A673 (cell line): ENCODE measurements at regions of chr13 and their contacts with region 1.

Region 1: DNA sequence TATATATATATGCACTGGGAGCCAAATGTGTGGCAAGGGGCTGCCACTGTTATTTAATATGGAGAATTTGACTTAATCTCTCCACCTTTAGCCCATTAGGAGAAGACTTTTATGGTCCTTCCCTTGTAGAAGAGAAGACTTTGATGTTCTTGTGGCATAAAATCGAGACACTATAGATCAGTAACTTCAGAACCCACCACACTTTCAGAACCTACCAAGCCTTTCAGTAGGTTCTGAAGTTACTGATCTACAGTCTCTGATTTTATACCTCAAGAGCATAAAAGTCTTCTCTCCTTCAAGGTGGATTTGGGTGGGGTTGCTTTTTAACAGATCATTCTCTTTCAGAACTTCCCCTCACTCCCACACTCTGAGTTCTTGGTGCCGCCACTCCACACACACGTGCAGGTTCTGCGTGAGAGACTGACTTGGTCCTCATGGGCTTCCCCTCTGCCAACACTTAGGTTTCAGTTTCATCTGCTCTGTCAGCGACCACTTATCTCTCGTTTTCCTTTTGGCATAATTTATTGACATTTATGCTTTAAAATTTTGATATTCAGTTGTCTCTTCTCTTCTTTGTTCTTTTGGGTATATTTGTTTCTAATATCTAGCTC is 213.4 kb upstream of the PCDH17 start:
- DNase-seq: no peak
- H3K4me3 ChIP-seq: no peak overlapping the region
- H3K27ac ChIP-seq: no peak overlapping the region
- H3K4me1 ChIP-seq: no peaks in the 10 kb centered on the region
- H3K27me3 ChIP-seq: no peaks in the 10 kb centered on the region
- CTCF ChIP-seq: no peak

Region 2: DNA sequence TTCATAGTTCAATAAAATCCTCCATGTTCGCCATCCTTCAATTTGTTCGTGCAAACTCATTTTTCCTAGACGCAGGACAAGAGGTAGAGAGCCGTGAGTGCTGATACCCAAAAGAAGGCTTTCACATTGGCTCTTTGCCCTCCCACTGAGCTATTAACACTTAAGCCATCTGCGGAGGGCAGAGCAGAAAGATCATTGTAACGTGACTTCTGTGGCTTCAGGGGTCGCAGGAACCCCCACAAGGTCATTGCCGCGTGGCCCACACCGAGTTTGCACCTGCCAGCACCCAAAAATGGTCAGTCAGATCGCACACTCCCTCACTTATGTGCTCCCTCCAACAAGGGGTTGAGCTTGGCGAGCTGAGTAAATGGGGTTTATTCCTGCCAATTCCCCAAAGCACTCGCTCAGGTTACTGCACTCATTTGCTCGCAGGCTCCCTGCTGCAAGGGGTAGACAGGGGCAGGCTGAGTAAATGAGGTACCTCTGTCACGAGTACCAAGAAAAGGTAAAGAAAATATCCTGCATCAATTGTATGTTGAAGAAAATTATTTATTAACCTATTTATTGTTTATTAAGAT is 107.1 kb before region 1 on chr13:
- CTCF ChIA-PET with region 1: no interaction called
- POLR2A ChIA-PET with region 1: interaction called, 14 read pairs
- intact Hi-C with region 1: no loop called
- DNase-seq: no peak
- H3K4me3 ChIP-seq: no peak overlapping the region
- H3K27ac ChIP-seq: no peak overlapping the region
- H3K4me1 ChIP-seq: no peaks in the 10 kb centered on the region
- H3K27me3 ChIP-seq: no peaks in the 10 kb centered on the region
- CTCF ChIP-seq: no peak

Region 3: DNA sequence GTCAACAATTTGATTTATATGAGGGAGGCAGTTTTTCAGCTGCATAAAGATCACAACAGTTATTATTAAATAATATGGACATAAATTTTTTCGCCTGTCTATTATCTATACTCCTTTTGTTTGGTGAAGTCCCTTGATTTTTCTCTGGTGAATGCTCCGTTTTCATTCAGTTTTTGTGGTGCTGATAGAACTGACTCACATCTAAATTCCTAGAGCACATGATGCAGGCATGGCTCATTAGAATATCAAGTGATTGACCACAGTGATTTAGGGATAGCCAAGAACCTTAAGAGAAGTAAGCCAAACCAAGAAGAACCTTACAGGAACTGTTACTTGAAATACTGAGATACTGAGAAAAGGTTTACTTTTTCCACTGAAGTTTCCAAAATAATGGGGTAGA is 42.3 kb before region 1 on chr13:
- CTCF ChIA-PET with region 1: no interaction called
- POLR2A ChIA-PET with region 1: no interaction called
- intact Hi-C with region 1: no loop called
- DNase-seq: no peak
- H3K4me3 ChIP-seq: no peak overlapping the region
- H3K27ac ChIP-seq: no peak overlapping the region
- H3K4me1 ChIP-seq: no peaks in the 10 kb centered on the region
- H3K27me3 ChIP-seq: no peaks in the 10 kb centered on the region
- CTCF ChIP-seq: no peak